ENCODE measurements at regions of chr1 and their contacts with region 1.

Region 1: DNA sequence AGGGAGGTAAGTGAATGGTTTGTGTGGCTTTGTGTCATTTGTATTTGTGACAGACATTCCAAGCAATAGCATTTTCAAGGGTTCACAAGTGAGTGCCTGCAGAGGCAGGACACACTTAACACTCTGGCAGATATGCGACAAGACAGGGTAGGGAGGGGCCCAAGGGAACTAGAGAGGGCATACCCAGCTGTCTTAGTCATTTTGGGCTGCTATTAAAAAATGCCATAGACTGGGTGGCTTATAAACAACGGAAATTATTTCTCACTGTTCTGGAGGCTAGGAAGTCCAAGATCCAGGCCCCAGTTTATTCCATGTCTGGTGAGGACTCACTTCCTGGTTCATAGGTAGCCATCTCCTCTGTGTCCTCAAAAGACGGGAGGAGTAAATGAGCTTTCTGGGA is 137.4 kb downstream of the FGGY start:
- DNase-seq: no peak
- H3K4me3 Mint-ChIP-seq: no peak overlapping the region
- H3K27ac Mint-ChIP-seq: no peak overlapping the region
- H3K4me1 Mint-ChIP-seq: peaks cover 2% of the 10 kb centered on the region
- H3K27me3 Mint-ChIP-seq: no peaks in the 10 kb centered on the region

Region 2: GRCh38 chr1:59343576-59343840 is 90.8 kb before region 1 on chr1:
- CTCF ChIA-PET with region 1: no interaction called
- POLR2A ChIA-PET with region 1: interaction called, 10 read pairs
- DNase-seq: no peak
- H3K4me3 Mint-ChIP-seq: no peak overlapping the region
- H3K27ac Mint-ChIP-seq: no peak overlapping the region
- H3K4me1 Mint-ChIP-seq: peaks cover 5% of the 10 kb centered on the region
- H3K27me3 Mint-ChIP-seq: no peaks in the 10 kb centered on the region

Region 3: GRCh38 chr1:59526240-59526639 is 91.9 kb after region 1 on chr1:
- CTCF ChIA-PET with region 1: no interaction called
- POLR2A ChIA-PET with region 1: no interaction called
- DNase-seq: no peak
- H3K4me3 Mint-ChIP-seq: no peak overlapping the region
- H3K27ac Mint-ChIP-seq: no peak overlapping the region
- H3K4me1 Mint-ChIP-seq: no peaks in the 10 kb centered on the region
- H3K27me3 Mint-ChIP-seq: no peaks in the 10 kb centered on the region